CD4-positive, alpha-beta memory T cell (primary cell): ENCODE measurements at regions of chr18 and their contacts with region 1.

Region 1: DNA sequence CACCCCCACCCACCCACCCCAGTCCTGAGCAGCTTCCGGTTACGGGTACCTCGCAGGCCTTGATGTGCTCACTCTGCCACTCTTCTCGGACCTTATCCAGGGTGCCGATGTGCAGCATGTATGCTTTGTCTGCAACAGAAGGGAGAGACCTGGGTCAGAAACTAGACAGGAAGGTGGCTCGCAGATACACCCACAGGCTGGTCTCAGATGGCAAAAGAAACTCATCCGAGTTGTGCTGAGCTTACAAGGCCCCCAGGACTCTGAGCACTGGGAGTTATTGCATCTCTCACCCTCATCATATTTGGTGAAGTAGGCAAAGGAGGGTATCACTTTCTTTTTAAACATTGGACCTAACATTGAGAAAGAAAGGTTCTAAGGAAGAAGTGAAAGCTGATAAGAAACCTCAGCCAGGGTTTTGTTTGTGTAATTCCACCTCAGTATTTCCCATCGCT is 30.6 kb upstream of the EPG5 start:
- DNase-seq: peak; percentile 10 to 48 (median 20)
- H3K4me3 ChIP-seq: peak overlapping the region; percentile 36 to 80
- H3K4me3 Mint-ChIP-seq: peak overlapping the region; percentile 41 to 89 (median 77)
- H3K27ac ChIP-seq: peak overlapping the region; percentile 52
- H3K27ac Mint-ChIP-seq: peak overlapping the region; percentile 86 to 94 (median 90)
- H3K4me1 ChIP-seq: peaks cover 55% of the 10 kb centered on the region
- H3K4me1 Mint-ChIP-seq: peaks cover 40 to 66% (median 54%) of the 10 kb centered on the region in 4 donors
- H3K27me3 ChIP-seq: no peaks in the 10 kb centered on the region
- H3K27me3 Mint-ChIP-seq: no peaks in the 10 kb centered on the region

Region 2: DNA sequence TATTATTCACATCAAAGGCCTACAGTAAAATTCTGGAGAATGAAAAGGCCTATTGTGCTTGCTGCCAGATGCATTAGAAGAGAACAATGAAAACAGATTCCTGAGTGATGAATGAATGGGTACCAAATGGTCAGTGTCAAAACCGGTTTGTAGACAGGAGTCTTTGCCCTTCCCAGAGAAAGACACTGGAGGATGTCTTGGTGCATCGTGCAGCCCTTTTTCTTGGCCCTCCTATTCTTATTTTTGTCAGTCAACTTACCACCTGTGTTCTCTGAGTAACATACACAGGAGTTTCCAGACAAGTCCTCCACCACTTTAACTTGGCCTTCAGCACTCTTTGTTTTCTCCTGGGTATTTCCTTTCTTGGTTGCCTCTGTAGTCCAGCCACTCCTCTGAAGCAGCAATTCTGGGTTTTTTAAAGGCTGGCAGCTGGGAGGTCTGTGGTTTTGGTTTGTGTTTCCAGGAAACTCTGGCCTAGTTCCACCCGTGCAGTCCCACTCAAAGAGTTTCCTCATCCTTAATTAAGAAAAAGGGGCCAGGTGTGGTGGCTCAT is 44.9 kb after region 1 on chr18:
- CTCF ChIA-PET with region 1: no interaction called
- POLR2A ChIA-PET with region 1: interaction called, 4 read pairs
- intact Hi-C with region 1: loop called (anchors 5 kb)
- DNase-seq: no peak
- H3K4me3 ChIP-seq: no peak overlapping the region
- H3K4me3 Mint-ChIP-seq: peak overlapping the region in 7 of 8 donors; percentile 51 to 85 (median 67)
- H3K27ac ChIP-seq: no peak overlapping the region
- H3K27ac Mint-ChIP-seq: peak overlapping the region; percentile 55 to 84 (median 74)
- H3K4me1 ChIP-seq: peaks cover 46% of the 10 kb centered on the region
- H3K4me1 Mint-ChIP-seq: peaks cover 40 to 55% (median 46%) of the 10 kb centered on the region in 4 donors
- H3K27me3 ChIP-seq: no peaks in the 10 kb centered on the region
- H3K27me3 Mint-ChIP-seq: no peaks in the 10 kb centered on the region